ENCODE measurements at regions of chr3 and their contacts with region 1.

Region 1: DNA sequence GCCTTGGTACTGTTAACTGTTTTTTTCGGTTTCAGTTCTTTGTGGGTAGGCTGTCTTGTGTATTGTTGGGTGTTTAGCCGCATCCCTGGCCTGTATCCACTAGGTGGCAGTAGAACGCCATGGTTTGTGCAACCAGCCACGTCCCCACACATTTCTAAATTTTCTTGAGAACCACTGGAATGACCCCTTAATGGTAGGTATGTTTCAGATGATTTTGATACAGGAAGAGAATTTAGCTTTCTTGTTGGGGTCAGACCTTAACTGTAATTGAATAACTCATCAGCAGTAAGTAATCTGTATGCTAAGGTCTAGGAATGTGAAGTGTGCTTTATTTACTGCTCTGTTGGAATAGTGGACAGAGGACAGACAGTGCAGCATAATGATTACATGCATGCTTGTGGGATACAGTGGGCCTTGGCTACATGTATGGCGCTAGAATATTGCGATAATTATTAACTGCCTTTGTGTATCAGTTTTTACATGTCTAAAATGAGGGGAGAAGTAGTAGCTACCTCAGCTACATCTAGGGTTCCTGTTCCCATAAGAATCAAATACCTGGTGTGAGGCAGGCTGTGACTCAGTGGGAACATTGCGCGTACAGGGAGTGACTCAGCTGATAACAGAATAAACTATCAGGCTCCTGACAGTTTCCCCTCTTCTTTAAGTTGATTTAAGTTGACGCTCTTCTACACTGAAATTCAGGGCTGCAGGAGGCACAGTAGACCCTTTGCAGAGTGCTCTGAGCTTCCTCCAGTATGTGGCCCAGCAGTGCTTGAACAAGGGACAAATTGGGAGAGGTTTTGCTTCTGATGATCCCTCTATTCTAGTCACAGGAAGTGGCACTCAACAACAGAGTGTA is 25.0 kb upstream of the GPR171 start:
- DNase-seq: peak; percentile 61 to 88 (median 79)
- ATAC-seq: peak; percentile 83
- H3K4me3 ChIP-seq: no peak overlapping the region
- H3K4me3 Mint-ChIP-seq: no peak overlapping the region
- H3K27ac ChIP-seq: no peak overlapping the region
- H3K27ac Mint-ChIP-seq: peak overlapping the region; percentile 4
- H3K4me1 ChIP-seq: peaks cover 16% of the 10 kb centered on the region
- H3K4me1 Mint-ChIP-seq: peaks cover 48% of the 10 kb centered on the region
- H3K27me3 ChIP-seq: no peaks in the 10 kb centered on the region
- H3K27me3 Mint-ChIP-seq: no peaks in the 10 kb centered on the region
- CTCF ChIP-seq: peak; percentile 92

Region 2: GRCh38 chr3:151156618-151157216 is 71.3 kb before region 1 on chr3:
- CTCF ChIA-PET with region 1: interaction called, 24 read pairs
- POLR2A ChIA-PET with region 1: no interaction called
- intact Hi-C with region 1: no loop called
- DNase-seq: peak in 3 of 9 experiments; percentile 34 to 73 (median 65)
- ATAC-seq: peak; percentile 69
- H3K4me3 ChIP-seq: no peak overlapping the region
- H3K4me3 Mint-ChIP-seq: no peak overlapping the region
- H3K27ac ChIP-seq: no peak overlapping the region
- H3K27ac Mint-ChIP-seq: no peak overlapping the region
- H3K4me1 ChIP-seq: no peaks in the 10 kb centered on the region
- H3K4me1 Mint-ChIP-seq: no peaks in the 10 kb centered on the region
- H3K27me3 ChIP-seq: no peaks in the 10 kb centered on the region
- H3K27me3 Mint-ChIP-seq: peaks cover 5% of the 10 kb centered on the region
- CTCF ChIP-seq: peak; percentile 78

Region 3: GRCh38 chr3:151210676-151211381 is 17.2 kb before region 1 on chr3:
- CTCF ChIA-PET with region 1: interaction called, 24 read pairs
- POLR2A ChIA-PET with region 1: interaction called, 3 read pairs
- intact Hi-C with region 1: no loop called
- DNase-seq: peak in 2 of 9 experiments; percentile 23 to 45
- ATAC-seq: peak; percentile 34
- H3K4me3 ChIP-seq: peak overlapping the region in 1 of 2 experiments; percentile 10
- H3K4me3 Mint-ChIP-seq: peak overlapping the region; percentile 32
- H3K27ac ChIP-seq: peak overlapping the region in 1 of 2 experiments; percentile 9
- H3K27ac Mint-ChIP-seq: peak overlapping the region; percentile 57
- H3K4me1 ChIP-seq: peaks cover 12% of the 10 kb centered on the region
- H3K4me1 Mint-ChIP-seq: peaks cover 43% of the 10 kb centered on the region
- H3K27me3 ChIP-seq: no peaks in the 10 kb centered on the region
- H3K27me3 Mint-ChIP-seq: no peaks in the 10 kb centered on the region
- CTCF ChIP-seq: no peak

Region 4: GRCh38 chr3:151268267-151269235 is 40.5 kb after region 1 on chr3:
- CTCF ChIA-PET with region 1: interaction called, 19 read pairs
- POLR2A ChIA-PET with region 1: interaction called, 4 read pairs
- intact Hi-C with region 1: no loop called
- DNase-seq: peak in 6 of 9 experiments; percentile 27 to 73 (median 46)
- ATAC-seq: peak; percentile 73
- H3K4me3 ChIP-seq: no peak overlapping the region
- H3K4me3 Mint-ChIP-seq: peak overlapping the region; percentile 78
- H3K27ac ChIP-seq: peak overlapping the region in 1 of 2 experiments; percentile 58
- H3K27ac Mint-ChIP-seq: peak overlapping the region; percentile 94
- H3K4me1 ChIP-seq: peaks cover 13% of the 10 kb centered on the region
- H3K4me1 Mint-ChIP-seq: peaks cover 25% of the 10 kb centered on the region
- H3K27me3 ChIP-seq: no peaks in the 10 kb centered on the region
- H3K27me3 Mint-ChIP-seq: no peaks in the 10 kb centered on the region
- CTCF ChIP-seq: no peak

Region 5: DNA sequence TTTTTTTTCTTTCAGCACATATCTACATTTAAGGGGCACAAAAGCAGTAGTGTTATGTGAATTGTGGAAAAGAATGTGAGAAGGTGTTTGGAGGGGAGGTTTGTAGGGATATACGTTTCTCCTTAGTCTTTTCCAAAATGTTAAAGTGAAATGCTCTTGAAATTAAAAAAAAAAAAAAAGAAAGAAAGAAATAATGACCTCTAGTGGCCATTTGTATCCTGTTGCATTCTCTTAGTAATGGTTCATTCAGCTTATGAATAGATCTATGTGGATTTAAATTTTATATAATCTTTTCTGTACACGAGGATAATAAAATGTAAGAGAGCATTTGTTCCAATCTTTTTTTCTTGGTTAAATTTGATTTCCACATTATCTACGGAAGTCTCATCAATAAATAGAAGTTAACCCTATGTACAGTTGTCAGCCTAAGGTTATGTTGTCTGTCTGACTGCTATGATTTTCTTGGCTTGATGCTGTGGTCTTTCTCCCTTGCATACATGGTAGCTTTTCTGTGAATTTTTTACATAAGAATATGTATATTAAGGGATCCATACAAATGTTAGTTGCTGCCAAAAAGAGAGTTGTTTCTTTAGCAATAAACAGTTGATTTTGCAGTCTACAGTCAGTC is 99.6 kb after region 1 on chr3:
- CTCF ChIA-PET with region 1: interaction called, 22 read pairs
- POLR2A ChIA-PET with region 1: no interaction called
- intact Hi-C with region 1: loop called in 1 of 2 experiments (anchors 1 kb)
- DNase-seq: peak in 2 of 9 experiments; percentile 12 to 32
- ATAC-seq: no peak
- H3K4me3 ChIP-seq: no peak overlapping the region
- H3K4me3 Mint-ChIP-seq: no peak overlapping the region
- H3K27ac ChIP-seq: no peak overlapping the region
- H3K27ac Mint-ChIP-seq: no peak overlapping the region
- H3K4me1 ChIP-seq: no peaks in the 10 kb centered on the region
- H3K4me1 Mint-ChIP-seq: peaks cover 6% of the 10 kb centered on the region
- H3K27me3 ChIP-seq: no peaks in the 10 kb centered on the region
- H3K27me3 Mint-ChIP-seq: peaks cover 2% of the 10 kb centered on the region
- CTCF ChIP-seq: peak; percentile 72

Region 6: DNA sequence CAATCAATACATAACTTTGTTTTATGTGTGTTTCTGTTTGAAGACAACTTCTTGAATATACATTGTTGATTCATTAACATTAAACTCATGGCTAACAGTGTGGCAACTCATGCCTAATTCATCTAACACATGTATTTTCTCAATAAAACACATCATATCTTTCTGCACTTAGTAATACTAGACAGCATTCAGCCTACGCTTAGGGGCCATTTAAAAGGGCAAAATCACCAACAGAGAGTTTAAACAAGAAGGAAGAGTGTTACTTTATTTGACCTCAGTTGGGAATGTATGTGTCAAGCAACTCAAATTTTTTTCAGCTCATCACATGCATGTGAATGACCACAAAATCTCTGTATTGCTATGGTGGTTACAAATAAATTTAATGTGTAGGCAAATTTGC is 376.9 kb after region 1 on chr3:
- CTCF ChIA-PET with region 1: no interaction called
- POLR2A ChIA-PET with region 1: no interaction called
- intact Hi-C with region 1: no loop called
- DNase-seq: no peak
- ATAC-seq: no peak
- H3K4me3 ChIP-seq: no peak overlapping the region
- H3K4me3 Mint-ChIP-seq: no peak overlapping the region
- H3K27ac ChIP-seq: no peak overlapping the region
- H3K27ac Mint-ChIP-seq: no peak overlapping the region
- H3K4me1 ChIP-seq: no peaks in the 10 kb centered on the region
- H3K4me1 Mint-ChIP-seq: no peaks in the 10 kb centered on the region
- H3K27me3 ChIP-seq: no peaks in the 10 kb centered on the region
- H3K27me3 Mint-ChIP-seq: peaks cover 6% of the 10 kb centered on the region
- CTCF ChIP-seq: no peak

Region 7: DNA sequence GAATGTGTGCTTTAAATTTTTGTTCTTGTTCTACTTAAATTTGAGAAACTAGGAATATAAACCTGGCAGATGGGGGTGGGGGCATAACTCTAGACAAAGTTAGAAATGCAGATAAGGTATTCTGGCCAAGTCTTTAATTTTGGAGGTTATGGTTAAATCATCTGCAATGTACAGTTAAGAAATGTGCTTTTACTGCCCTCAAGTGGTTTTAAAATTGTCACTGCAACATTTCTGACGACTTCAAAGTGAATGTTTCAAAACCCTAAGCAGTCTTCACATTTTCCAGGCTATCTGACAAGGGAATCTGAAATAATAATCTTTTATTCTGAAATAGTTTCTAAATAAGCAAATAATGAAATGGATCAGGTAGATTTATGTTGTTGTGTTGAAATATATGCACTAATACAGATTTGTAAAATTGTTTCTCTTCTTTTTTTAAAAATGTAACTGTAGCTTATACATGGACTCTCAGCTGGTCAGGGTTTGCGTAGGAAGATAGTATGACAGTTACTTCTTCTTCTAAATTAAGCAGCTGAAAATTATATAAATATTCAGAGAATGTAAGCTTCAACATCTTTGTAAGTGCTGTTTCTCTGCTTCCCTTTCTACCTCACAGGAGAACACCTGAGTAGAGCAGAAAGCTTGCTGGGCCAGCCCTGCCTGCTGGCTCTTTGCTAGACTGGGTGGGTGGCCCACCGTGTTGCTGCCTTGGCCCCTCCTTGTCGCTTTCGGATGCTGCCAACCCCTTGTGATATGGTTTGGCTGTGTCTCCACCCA is 690.4 kb after region 1 on chr3:
- CTCF ChIA-PET with region 1: interaction called, 4 read pairs
- POLR2A ChIA-PET with region 1: no interaction called
- intact Hi-C with region 1: loop called in 1 of 2 experiments (anchors 1 kb)
- DNase-seq: peak in 2 of 9 experiments; percentile 46 to 64
- ATAC-seq: no peak
- H3K4me3 ChIP-seq: no peak overlapping the region
- H3K4me3 Mint-ChIP-seq: no peak overlapping the region
- H3K27ac ChIP-seq: no peak overlapping the region
- H3K27ac Mint-ChIP-seq: no peak overlapping the region
- H3K4me1 ChIP-seq: no peaks in the 10 kb centered on the region
- H3K4me1 Mint-ChIP-seq: no peaks in the 10 kb centered on the region
- H3K27me3 ChIP-seq: no peaks in the 10 kb centered on the region
- H3K27me3 Mint-ChIP-seq: no peaks in the 10 kb centered on the region
- CTCF ChIP-seq: peak; percentile 63